Left cardiac atrium (tissue), 4 donors: ENCODE measurements at regions of chrX and their contacts with region 1.

Region 1: GRCh38 chrX:46796574-46797191 is 37.8 kb upstream of the SLC9A7 start:
- DNase-seq: peak; percentile 75
- ATAC-seq: peak; percentile 75 to 80

Region 2: GRCh38 chrX:46545111-46546005 is 251.3 kb before region 1 on chrX and contains the start of gene ZNF674:
- intact Hi-C with region 1: loop called in 1 of 2 experiments (anchors 10 kb)
- DNase-seq: peak; percentile 95
- ATAC-seq: peak; percentile 96
- total RNA-seq, gene ZNF674: 2.2 to 2.7 TPM

Region 3: DNA sequence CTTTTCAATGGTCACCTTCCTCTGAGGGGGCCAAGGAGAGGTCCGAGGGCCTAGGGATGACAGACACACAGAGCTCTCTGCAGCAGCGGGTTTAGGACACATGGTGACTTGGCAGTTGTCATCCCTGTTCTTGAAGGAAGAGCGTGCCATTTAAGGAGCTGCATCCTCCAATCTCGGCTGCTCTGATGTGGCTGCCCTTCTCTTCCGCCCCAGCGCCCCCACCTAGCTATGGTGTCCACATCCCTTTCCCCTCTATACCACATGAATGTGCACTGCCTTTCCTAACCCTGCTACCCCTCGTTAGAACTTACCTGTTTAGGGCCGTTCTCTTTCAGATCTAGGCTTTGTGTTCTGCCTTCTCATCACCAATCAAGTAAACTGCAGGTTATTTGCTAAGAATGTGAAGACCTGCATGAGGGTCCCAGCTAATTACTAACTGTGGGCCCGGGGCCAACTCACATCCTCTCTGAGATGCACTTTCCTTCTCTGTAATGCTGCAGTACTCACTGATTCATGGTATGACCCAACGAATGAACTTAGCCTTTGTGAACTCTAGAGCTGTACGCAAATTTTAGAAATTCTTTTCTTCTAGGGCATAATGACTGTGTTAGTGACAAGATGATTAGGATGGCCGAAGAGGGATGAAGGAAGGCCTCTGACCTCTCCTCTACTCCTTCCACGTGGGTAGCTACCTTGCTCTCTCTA is 184.9 kb before region 1 on chrX:
- intact Hi-C with region 1: no loop called
- DNase-seq: no peak
- ATAC-seq: no peak

Region 4: GRCh38 chrX:46653482-46653881 is 143.2 kb before region 1 on chrX:
- intact Hi-C with region 1: no loop called
- DNase-seq: no peak
- ATAC-seq: no peak

Region 5: DNA sequence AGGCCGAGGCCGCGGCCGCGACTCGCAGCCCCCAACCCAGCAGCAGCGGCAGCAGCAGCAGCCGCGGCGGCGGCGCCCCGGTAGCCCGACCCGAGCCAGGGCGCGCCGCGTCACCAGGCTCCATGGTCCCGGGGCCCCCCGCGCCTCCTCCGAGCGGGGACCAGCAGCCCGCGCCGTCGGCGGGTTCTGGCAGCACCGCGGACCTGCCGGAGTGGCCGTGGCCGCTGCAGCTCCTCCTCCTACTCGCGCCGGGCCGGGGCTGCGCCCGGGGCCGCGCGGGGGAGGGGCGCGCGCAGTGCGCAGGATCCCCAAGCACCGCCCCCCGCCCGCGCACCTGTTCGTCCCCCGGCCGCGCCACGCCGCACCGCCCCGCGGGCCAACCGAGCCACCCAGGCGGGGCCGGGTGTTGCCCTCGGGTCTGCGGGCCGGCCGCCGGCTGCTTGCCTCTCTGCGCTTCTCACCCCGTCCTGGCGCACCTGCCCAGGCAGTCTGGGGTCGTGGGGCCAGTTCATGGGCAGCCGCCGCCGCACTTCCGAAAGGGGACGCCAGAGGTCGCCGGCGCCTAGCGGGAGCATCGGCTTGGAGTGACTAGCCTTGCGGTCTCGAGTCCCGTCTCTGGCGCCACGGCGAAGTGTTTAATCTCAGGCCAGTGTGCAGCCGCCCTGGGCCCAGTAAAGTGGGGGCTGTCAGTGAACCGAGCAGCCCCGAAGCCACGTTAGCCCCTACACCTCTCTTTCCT is 37.6 kb before region 1 on chrX and contains the start of gene SLC9A7:
- intact Hi-C with region 1: loop called in 1 of 2 experiments (anchors 2 kb)
- DNase-seq: peak; percentile 75
- ATAC-seq: peak; percentile 90 to 96
- total RNA-seq, gene SLC9A7: 4.0 to 4.8 TPM